Activated CD4-positive, alpha-beta T cell treated with anti-CD3 and anti-CD28 coated beads for 36 hours (primary cell): ENCODE measurements at regions of chr15 and their contacts with region 1.

Region 1: DNA sequence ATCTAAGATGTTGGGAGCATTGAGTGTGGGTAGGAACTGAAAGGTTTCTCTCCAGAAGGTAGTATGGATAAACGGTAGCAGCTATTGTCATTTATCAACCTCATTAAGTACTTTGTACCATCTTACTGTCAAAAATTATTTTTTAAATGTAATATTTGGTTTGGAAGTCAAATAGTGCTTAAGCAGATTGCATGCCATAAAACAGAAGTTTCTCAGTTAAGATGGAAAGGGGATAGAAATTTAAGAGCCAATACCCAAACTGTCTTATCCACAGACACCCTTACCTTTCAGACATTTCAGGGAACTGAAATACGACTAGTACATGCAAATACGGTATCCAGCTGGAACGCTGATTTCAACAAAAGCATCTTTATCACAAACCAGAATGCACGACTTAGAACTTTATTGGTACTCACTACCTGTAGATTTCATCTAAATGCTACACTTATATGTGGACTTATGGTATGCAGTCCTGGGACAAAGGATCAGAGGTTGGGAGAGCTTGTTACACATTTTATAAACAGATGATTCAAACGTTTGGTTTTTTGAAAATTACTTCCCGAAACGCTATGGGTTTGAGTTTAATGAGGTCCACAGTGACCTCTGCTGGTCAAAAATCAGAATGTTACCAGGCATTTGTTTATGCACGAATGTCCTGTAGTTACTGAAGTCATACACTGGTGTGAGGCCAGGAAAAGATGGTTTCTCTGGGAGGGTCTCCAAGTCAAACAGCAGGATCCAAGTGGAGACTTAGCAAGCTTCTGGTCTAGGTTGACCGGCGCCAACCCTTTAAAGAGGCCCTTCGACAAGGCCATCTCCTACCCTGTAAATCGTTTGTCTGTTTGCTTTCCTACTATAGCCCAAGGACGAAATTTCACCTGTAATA is 45.7 kb upstream of the DUT start:
- DNase-seq: peak; percentile 49
- ATAC-seq: peak; percentile 58
- H3K4me3 Mint-ChIP-seq: no peak overlapping the region
- H3K27ac Mint-ChIP-seq: no peak overlapping the region
- H3K4me1 Mint-ChIP-seq: peaks cover 4% of the 10 kb centered on the region
- H3K27me3 Mint-ChIP-seq: peaks cover 4% of the 10 kb centered on the region

Region 2: GRCh38 chr15:46312133-46312740 is 1973.3 kb before region 1 on chr15:
- CTCF ChIA-PET with region 1: interaction called, 3 read pairs
- POLR2A ChIA-PET with region 1: no interaction called
- intact Hi-C with region 1: loop called (anchors 5 to 10 kb)
- DNase-seq: peak; percentile 77
- ATAC-seq: peak; percentile 73
- H3K4me3 Mint-ChIP-seq: no peak overlapping the region
- H3K27ac Mint-ChIP-seq: no peak overlapping the region
- H3K4me1 Mint-ChIP-seq: no peaks in the 10 kb centered on the region
- H3K27me3 Mint-ChIP-seq: no peaks in the 10 kb centered on the region

Region 3: DNA sequence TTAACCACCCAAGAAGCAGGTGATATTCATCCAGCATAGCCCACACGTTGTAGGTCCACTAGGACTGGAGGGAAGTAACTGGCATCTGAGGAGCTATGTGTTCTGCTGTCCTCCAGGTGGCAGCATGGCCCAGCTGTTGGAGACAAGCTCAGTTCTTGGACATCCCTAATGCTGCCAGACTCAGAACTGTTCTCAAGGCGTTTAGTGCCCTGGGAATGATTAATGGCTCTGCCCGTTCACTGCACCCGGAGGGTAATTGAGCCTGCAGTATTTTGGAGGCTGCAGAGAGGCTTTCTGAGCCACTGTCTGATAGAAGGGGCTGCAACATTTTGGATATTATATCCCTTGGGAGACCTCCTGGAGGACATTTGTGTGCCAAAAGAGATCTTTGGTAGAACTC is 1089.5 kb before region 1 on chr15:
- CTCF ChIA-PET with region 1: interaction called, 13 read pairs
- POLR2A ChIA-PET with region 1: no interaction called
- intact Hi-C with region 1: loop called (anchors 1 to 5 kb)
- DNase-seq: peak; percentile 75
- ATAC-seq: peak; percentile 36
- H3K4me3 Mint-ChIP-seq: no peak overlapping the region
- H3K27ac Mint-ChIP-seq: no peak overlapping the region
- H3K4me1 Mint-ChIP-seq: no peaks in the 10 kb centered on the region
- H3K27me3 Mint-ChIP-seq: peaks cover 5% of the 10 kb centered on the region